ENCODE measurements at regions of chr15 and their contacts with region 1.

Region 1: DNA sequence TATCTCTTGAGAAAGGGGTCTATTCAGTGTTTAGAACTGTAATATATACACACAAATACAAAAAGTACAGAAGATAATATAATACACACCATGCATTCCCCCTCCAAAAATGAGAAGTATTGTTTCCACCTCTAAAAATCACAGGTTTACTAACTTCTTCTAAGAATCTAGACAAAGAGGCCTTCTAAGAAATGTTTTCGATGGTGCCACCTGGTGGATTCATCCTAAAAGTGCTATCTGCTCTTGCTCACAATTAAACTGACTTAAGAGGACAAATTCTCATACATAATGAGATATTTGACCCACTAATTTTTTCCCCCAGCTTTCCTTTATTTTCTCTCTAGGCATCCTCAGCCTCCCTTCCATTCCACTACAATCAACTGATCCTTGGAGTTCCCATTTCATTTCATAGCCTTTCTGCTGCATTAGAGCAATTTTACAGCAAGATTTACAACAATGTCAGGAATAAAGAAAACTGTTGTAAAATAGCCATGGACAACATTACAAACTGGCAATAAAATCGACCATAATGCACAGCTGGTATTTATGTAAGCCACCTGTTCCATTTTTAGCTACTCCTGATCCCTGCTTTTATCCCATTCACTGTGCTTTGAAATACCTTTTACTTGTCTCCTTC is 124.6 kb downstream of the ARRDC4 start:
- DNase-seq: peak; percentile 36
- ATAC-seq: no peak
- H3K4me3 ChIP-seq: no peak overlapping the region
- H3K27ac ChIP-seq: no peak overlapping the region
- H3K4me1 ChIP-seq: no peaks in the 10 kb centered on the region
- H3K27me3 ChIP-seq: no peaks in the 10 kb centered on the region
- CTCF ChIP-seq: peak; percentile 64; the same call in 1 of the 2 replicates

Region 2: DNA sequence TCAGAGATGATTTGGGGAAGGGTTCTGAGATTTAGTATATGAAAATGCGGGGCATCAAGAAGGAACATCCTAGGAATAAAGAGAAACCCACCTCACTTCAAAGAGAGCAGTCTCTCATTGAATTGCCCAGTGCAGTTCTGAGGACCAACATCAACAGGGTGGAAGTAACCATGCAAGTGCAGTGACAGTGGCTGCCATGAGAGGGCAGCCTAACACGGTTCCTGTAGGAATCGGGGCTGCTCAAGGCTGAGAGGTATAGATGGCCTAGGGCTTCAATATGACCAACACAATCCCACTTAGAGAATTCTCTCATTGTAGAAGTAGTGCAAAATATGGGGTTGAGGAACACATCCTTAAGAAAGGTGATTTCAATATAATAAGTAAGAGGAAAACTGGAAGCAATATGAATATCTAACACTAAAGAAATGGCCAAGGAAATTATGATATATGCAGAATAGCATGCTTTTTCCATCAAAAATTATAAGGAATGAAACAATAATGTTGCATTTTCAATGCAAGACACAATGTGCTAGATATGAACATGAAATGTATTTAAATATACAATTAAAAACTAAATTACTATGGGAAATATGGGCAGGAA is 175.7 kb before region 1 on chr15:
- CTCF ChIA-PET with region 1: no interaction called
- POLR2A ChIA-PET with region 1: no interaction called
- in situ Hi-C with region 1: no loop called
- intact Hi-C with region 1: loop called (anchors 1 kb)
- DNase-seq: peak; percentile 39
- ATAC-seq: peak; percentile 99
- H3K4me3 ChIP-seq: no peak overlapping the region
- H3K27ac ChIP-seq: no peak overlapping the region
- H3K4me1 ChIP-seq: no peaks in the 10 kb centered on the region
- H3K27me3 ChIP-seq: peaks cover 13% of the 10 kb centered on the region
- CTCF ChIP-seq: peak; percentile 94

Region 3: GRCh38 chr15:98025235-98025634 is 59.9 kb before region 1 on chr15:
- CTCF ChIA-PET with region 1: no interaction called
- POLR2A ChIA-PET with region 1: no interaction called
- in situ Hi-C with region 1: no loop called
- intact Hi-C with region 1: no loop called
- DNase-seq: no peak
- ATAC-seq: no peak
- H3K4me3 ChIP-seq: no peak overlapping the region
- H3K27ac ChIP-seq: no peak overlapping the region
- H3K4me1 ChIP-seq: no peaks in the 10 kb centered on the region
- H3K27me3 ChIP-seq: no peaks in the 10 kb centered on the region
- CTCF ChIP-seq: no peak

Region 4: DNA sequence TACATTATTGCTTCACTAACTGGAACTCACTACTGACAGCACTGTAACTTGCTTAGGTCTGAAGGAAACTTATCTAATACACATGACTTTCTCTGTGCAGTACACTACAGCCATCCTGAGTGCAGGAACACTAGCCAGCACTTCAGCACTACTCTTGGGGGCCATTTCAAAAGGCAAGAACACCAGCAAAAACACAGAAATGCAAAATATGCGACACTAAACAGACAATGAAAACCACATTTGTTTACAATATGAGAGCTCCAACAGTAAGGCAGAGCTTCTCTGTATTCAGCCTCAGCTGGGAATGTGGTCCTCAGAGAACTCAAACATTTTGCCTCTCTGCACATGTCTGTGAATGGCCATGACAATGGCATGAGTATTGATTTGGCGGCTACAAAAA is 15.0 kb before region 1 on chr15:
- CTCF ChIA-PET with region 1: no interaction called
- POLR2A ChIA-PET with region 1: no interaction called
- in situ Hi-C with region 1: no loop called
- intact Hi-C with region 1: no loop called
- DNase-seq: no peak
- ATAC-seq: no peak
- H3K4me3 ChIP-seq: no peak overlapping the region
- H3K27ac ChIP-seq: no peak overlapping the region
- H3K4me1 ChIP-seq: no peaks in the 10 kb centered on the region
- H3K27me3 ChIP-seq: no peaks in the 10 kb centered on the region
- CTCF ChIP-seq: no peak

Region 5: DNA sequence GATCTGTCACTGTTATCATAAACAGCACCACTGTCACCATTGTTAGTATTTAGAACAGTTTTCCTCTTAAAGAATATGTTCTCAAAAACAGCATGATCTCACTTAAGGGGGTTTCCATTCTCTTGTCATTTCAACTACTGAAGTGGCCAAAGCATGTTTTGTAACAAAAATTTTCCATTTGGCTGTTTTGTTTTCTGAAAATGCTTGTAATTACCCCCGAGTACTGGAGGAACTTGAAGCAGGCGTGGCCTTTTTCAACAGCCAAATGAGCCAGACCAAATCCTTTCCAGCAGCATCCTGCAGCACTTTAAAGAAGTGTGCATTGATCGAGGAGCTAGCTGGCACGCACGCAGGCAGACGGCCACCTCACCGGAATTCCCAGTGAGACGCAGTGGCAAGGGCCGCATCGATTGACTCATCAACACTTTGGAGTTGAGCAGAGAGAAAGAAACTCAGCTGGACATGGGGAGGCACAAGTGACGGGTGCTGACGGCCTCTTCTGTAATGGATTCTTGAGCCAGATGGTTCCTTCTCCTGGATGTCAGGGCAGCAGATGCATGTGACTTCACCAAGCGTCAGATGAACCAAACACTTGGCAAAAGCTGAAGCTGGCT is 328.9 kb after region 1 on chr15:
- CTCF ChIA-PET with region 1: no interaction called
- POLR2A ChIA-PET with region 1: no interaction called
- in situ Hi-C with region 1: no loop called
- intact Hi-C with region 1: no loop called
- DNase-seq: no peak
- ATAC-seq: no peak
- H3K4me3 ChIP-seq: no peak overlapping the region
- H3K27ac ChIP-seq: no peak overlapping the region
- H3K4me1 ChIP-seq: no peaks in the 10 kb centered on the region
- H3K27me3 ChIP-seq: peaks cover 8% of the 10 kb centered on the region
- CTCF ChIP-seq: no peak

Measured in Panc1 (cell line).